ENCODE measurements at regions of chr15 and their contacts with region 1.

Region 1: DNA sequence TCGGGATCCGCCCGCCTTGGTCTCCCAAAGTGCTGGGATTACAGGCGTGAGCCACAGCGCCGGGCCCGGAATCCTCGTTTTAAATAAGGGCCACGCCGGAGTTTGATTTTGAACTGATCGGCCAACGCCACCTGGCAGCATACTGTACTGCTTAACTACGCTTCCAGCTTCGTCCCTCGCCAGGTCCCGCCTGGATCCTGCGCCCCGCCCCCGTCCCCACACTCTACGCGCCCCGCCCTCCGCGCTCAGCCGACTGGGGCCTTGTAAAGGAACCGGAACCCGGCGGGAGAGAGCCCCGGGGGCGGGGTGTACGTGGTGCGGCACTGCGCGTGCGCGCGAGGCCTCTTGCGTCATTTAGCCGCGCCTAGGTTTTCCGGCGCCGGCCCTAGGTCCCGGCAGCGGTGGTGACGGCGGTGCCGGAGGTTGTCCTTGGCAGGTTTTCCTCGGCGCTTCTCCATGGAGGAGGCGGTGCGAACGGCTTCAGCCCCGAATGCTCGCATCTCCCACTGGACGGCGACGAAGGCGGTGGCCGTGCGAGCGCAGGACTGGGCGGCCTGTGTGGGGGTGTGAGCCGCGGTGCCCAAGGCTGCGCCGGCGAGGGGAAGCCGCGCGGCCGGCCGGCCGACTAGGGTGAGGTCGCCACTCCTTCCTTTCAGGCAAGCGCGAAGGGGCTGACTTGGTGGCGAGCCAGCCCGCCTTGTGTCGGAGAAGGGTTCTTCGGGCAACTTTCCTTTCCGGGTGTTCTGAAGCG is at the start of gene NIPA2:
- DNase-seq: peak; percentile 99
- H3K4me3 ChIP-seq: peak within 1 kb of the TSS; percentile 90
- H3K27ac ChIP-seq: peak within 1 kb of the TSS; percentile 96
- H3K4me1 ChIP-seq: peaks cover 9% of the 10 kb centered on the region
- H3K27me3 ChIP-seq: no peaks in the 10 kb centered on the region
- CTCF ChIP-seq: no peak
- total RNA-seq, gene NIPA2: 72.2 to 99.5 TPM

Region 2: GRCh38 chr15:22786868-22787698 is 51.4 kb before region 1 on chr15:
- intact Hi-C with region 1: loop called (anchors 5 kb)
- DNase-seq: peak; percentile 33
- H3K4me3 ChIP-seq: peak overlapping the region; percentile 79
- H3K27ac ChIP-seq: peak overlapping the region; percentile 50
- H3K4me1 ChIP-seq: no peaks in the 10 kb centered on the region
- H3K27me3 ChIP-seq: no peaks in the 10 kb centered on the region
- CTCF ChIP-seq: no peak

Region 3: DNA sequence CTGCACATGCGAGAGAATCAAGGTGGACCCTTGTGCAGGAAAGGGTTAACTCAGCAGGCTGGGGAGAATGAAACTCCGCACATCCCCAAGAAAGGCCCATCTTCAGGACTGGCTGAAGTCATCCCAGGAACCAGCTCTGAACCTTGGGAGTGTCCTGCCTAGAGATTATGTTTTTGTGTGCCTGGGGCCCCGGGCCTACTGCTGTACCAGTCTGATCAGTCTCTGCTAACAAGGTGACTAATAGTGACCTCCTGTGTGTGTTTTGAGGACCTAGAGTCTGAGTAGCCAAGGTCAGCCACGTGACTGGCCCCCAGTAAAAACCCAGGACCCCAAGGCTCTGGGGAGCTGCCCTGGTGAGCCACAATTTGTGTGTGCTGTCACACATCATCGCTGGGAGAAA is 83.5 kb after region 1 on chr15:
- intact Hi-C with region 1: loop called (anchors 10 kb)
- DNase-seq: no peak
- H3K4me3 ChIP-seq: no peak overlapping the region
- H3K27ac ChIP-seq: no peak overlapping the region
- H3K4me1 ChIP-seq: no peaks in the 10 kb centered on the region
- H3K27me3 ChIP-seq: no peaks in the 10 kb centered on the region
- CTCF ChIP-seq: no peak

Region 4: DNA sequence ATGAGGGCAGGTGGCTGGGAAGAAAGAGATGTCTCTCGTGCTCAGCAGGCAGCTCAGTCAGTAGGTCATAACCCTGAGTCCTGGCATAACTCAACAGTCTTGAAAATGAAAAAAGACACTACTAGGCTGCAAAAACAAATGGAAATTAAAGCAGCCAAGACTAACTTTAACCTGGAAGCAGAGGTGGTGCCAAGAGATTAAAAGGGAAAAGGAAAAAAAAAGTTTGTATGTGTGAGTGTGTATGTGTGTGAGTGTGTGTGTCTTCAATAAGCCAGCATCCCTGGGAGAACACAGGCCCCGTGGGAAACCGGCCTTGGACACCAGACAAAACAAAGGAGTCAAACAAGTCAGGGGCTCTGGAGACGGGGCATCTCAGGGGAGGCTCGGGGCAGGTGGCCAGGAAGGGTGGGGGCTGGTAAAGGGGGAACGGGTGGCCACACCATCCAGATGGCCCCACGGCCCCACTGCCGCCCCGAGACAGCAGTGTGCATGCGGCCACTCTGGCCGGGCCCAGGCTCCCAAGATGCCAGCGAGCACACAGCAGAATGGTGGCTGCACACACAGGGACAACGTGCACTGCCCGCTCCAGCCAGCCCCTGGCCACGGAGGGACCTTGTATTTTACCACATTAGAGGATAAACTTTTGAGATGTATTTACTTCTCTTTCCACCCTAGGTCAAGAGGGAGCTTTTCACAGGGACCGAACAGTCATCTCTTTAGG is 118.0 kb after region 1 on chr15:
- intact Hi-C with region 1: no loop called
- DNase-seq: no peak
- H3K4me3 ChIP-seq: no peak overlapping the region
- H3K27ac ChIP-seq: no peak overlapping the region
- H3K4me1 ChIP-seq: no peaks in the 10 kb centered on the region
- H3K27me3 ChIP-seq: no peaks in the 10 kb centered on the region
- CTCF ChIP-seq: no peak

Measured in colonic mucosa (tissue), 4 donors.